B cell (primary cell): ENCODE measurements at regions of chr9 and their contacts with region 1.

Region 1: GRCh38 chr9:6910032-6910431 is 152.3 kb downstream of the KDM4C start:
- DNase-seq: peak; percentile 9
- ATAC-seq: no peak
- H3K4me3 ChIP-seq: no peak overlapping the region
- H3K4me3 Mint-ChIP-seq: no peak overlapping the region
- H3K27ac ChIP-seq: no peak overlapping the region
- H3K27ac Mint-ChIP-seq: no peak overlapping the region
- H3K4me1 ChIP-seq: peaks cover 0 to 12% of the 10 kb centered on the region in 2 donors
- H3K4me1 Mint-ChIP-seq: peaks cover 20% of the 10 kb centered on the region
- H3K27me3 ChIP-seq: no peaks in the 10 kb centered on the region
- H3K27me3 Mint-ChIP-seq: no peaks in the 10 kb centered on the region
- CTCF ChIP-seq: peak; percentile 53

Region 2: GRCh38 chr9:6931913-6932312 is 21.9 kb after region 1 on chr9:
- CTCF ChIA-PET with region 1: no interaction called
- POLR2A ChIA-PET with region 1: no interaction called
- intact Hi-C with region 1: no loop called
- DNase-seq: no peak
- ATAC-seq: peak; percentile 82
- H3K4me3 ChIP-seq: no peak overlapping the region
- H3K4me3 Mint-ChIP-seq: peak overlapping the region; percentile 64
- H3K27ac ChIP-seq: peak overlapping the region in 1 of 2 donors; percentile 14
- H3K27ac Mint-ChIP-seq: peak overlapping the region; percentile 83
- H3K4me1 ChIP-seq: peaks cover 14 to 26% of the 10 kb centered on the region in 2 donors
- H3K4me1 Mint-ChIP-seq: peaks cover 51% of the 10 kb centered on the region
- H3K27me3 ChIP-seq: no peaks in the 10 kb centered on the region
- H3K27me3 Mint-ChIP-seq: no peaks in the 10 kb centered on the region
- CTCF ChIP-seq: no peak

Region 3: GRCh38 chr9:6944093-6944551 is 34.1 kb after region 1 on chr9:
- CTCF ChIA-PET with region 1: no interaction called
- POLR2A ChIA-PET with region 1: no interaction called
- intact Hi-C with region 1: no loop called
- DNase-seq: no peak
- ATAC-seq: no peak
- H3K4me3 ChIP-seq: no peak overlapping the region
- H3K4me3 Mint-ChIP-seq: no peak overlapping the region
- H3K27ac ChIP-seq: no peak overlapping the region
- H3K27ac Mint-ChIP-seq: no peak overlapping the region
- H3K4me1 ChIP-seq: peaks cover 0 to 4% of the 10 kb centered on the region in 2 donors
- H3K4me1 Mint-ChIP-seq: peaks cover 22% of the 10 kb centered on the region
- H3K27me3 ChIP-seq: no peaks in the 10 kb centered on the region
- H3K27me3 Mint-ChIP-seq: no peaks in the 10 kb centered on the region
- CTCF ChIP-seq: no peak

Region 4: GRCh38 chr9:6960777-6961176 is 50.7 kb after region 1 on chr9:
- CTCF ChIA-PET with region 1: no interaction called
- POLR2A ChIA-PET with region 1: no interaction called
- intact Hi-C with region 1: loop called (anchors 10 kb)
- DNase-seq: no peak
- ATAC-seq: no peak
- H3K4me3 ChIP-seq: no peak overlapping the region
- H3K4me3 Mint-ChIP-seq: no peak overlapping the region
- H3K27ac ChIP-seq: peak overlapping the region in 1 of 2 donors; percentile 34
- H3K27ac Mint-ChIP-seq: peak overlapping the region; percentile 54
- H3K4me1 ChIP-seq: peaks cover 4 to 10% of the 10 kb centered on the region in 2 donors
- H3K4me1 Mint-ChIP-seq: peaks cover 29% of the 10 kb centered on the region
- H3K27me3 ChIP-seq: no peaks in the 10 kb centered on the region
- H3K27me3 Mint-ChIP-seq: no peaks in the 10 kb centered on the region
- CTCF ChIP-seq: no peak